Prostate gland (tissue), 2 donors: ENCODE measurements at regions of chr9 and their contacts with region 1.

Region 1: DNA sequence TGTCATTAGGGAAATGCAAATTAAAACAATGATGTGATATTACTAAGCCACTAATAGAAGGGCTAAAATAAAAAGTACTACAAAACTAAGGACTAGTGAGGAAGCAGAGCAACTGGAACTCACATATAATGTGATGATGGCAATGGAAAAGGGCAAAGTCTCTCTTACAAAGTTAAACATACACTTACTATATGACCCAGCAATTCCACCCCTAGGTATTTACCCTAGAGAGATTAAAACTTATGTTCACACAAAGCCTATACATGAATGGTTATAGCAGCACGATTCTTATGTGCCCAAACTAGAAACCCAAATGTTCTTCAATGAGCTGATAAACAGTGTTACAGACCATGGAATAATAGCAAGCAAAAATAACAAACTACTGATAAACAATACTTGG is 643.7 kb downstream of the TLE1 start:
- DNase-seq: no peak
- H3K4me3 ChIP-seq: no peak overlapping the region
- H3K27ac ChIP-seq: no peak overlapping the region
- H3K4me1 ChIP-seq: no peaks in the 10 kb centered on the region
- H3K27me3 ChIP-seq: no peaks in the 10 kb centered on the region
- CTCF ChIP-seq: no peak
- POLR2A ChIP-seq: no peak

Region 2: DNA sequence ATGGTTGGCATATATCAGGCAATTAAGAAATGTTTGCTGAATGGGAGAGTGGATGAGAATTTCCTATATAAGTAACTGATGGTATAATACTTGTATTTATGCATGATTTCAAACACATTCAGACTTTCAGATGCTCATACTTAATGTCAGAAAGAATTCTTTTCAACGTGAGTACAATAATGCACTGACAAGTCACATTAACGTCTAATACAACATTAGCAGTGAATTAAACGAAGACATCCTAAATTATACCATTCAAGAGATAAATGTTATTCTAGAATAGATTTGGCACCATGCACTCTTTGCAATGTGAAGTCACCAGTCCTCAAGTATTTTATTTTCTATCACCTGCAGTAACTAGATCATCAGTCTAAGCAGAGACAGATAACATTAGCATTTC is 69.3 kb before region 1 on chr9:
- intact Hi-C with region 1: loop called (anchors 10 kb)
- DNase-seq: no peak
- H3K4me3 ChIP-seq: no peak overlapping the region
- H3K27ac ChIP-seq: no peak overlapping the region
- H3K4me1 ChIP-seq: no peaks in the 10 kb centered on the region
- H3K27me3 ChIP-seq: no peaks in the 10 kb centered on the region
- CTCF ChIP-seq: no peak
- POLR2A ChIP-seq: no peak